Caco-2 (cell line): ENCODE measurements at regions of chr13 and their contacts with region 1.

Region 1: GRCh38 chr13:25267715-25268114 is 19.6 kb downstream of the MTMR6 start:
- DNase-seq: peak in 1 of 2 experiments; percentile 5
- H3K4me3 ChIP-seq: no peak overlapping the region
- H3K4me3 Mint-ChIP-seq: no peak overlapping the region
- H3K27ac Mint-ChIP-seq: no peak overlapping the region
- H3K4me1 ChIP-seq: no peaks in the 10 kb centered on the region
- H3K4me1 Mint-ChIP-seq: no peaks in the 10 kb centered on the region
- H3K27me3 ChIP-seq: no peaks in the 10 kb centered on the region
- H3K27me3 Mint-ChIP-seq: no peaks in the 10 kb centered on the region
- CTCF ChIP-seq: peak in 1 of 2 experiments; percentile 50

Region 2: DNA sequence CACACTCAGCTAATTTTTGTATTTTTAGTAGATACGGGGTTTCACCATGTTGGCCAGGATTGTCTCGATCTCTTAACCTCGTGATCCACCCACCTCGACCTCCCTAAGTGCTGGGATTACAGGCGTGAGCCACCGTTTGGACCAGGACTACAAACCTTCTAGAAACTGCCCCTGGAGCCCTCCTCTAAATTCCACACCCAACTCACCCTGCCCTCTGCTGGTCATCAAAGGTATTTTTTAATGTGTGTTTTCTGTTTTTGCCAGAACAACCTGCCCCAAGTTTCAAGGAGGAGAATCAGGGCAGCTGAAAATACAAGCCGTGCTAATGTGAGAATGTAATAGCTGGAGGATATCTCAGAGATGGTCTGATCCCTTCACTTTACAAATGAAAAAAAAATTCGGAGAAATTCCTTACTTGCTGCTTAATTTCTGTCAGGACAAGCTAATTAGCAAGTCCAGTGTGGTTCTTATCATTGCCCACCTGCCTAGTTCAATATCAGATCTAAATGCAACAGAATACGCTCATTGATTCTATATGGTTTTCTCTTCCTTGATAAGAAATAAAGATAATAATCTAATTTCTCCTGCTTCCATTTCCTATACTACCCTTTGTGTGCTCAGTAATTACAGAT is 108.1 kb after region 1 on chr13:
- CTCF ChIA-PET with region 1: no interaction called
- POLR2A ChIA-PET with region 1: no interaction called
- intact Hi-C with region 1: loop called (anchors 1 kb)
- DNase-seq: peak; percentile 49 to 72
- H3K4me3 ChIP-seq: no peak overlapping the region
- H3K4me3 Mint-ChIP-seq: no peak overlapping the region
- H3K27ac Mint-ChIP-seq: no peak overlapping the region
- H3K4me1 ChIP-seq: no peaks in the 10 kb centered on the region
- H3K4me1 Mint-ChIP-seq: no peaks in the 10 kb centered on the region
- H3K27me3 ChIP-seq: no peaks in the 10 kb centered on the region; the same call in 1 of the 2 replicates
- H3K27me3 Mint-ChIP-seq: peaks cover 14% of the 10 kb centered on the region
- CTCF ChIP-seq: peak; percentile 67 to 70

Region 3: DNA sequence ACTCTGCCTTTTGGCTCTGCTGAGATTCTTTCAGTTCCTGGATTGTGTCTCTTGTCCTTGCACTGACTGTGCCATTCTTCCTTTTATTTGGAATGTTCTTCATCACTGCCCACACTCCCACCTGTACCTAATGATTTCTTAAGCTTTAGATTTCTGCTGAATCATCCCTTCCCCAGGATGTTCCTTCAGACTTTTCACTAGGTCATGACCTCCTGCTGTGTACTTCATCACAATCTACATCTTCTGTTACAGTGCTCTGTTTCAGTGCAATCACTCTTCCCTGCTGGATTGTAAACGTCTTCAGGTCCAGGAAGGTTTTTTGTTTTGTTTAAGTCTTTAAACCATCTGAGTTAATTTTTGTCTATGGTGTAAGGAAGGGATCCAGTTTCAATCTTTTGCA is 385.1 kb after region 1 on chr13:
- CTCF ChIA-PET with region 1: no interaction called
- POLR2A ChIA-PET with region 1: no interaction called
- intact Hi-C with region 1: no loop called
- DNase-seq: no peak
- H3K4me3 ChIP-seq: no peak overlapping the region
- H3K4me3 Mint-ChIP-seq: no peak overlapping the region
- H3K27ac Mint-ChIP-seq: no peak overlapping the region
- H3K4me1 ChIP-seq: no peaks in the 10 kb centered on the region
- H3K4me1 Mint-ChIP-seq: no peaks in the 10 kb centered on the region
- H3K27me3 ChIP-seq: no peaks in the 10 kb centered on the region
- H3K27me3 Mint-ChIP-seq: peaks cover 3% of the 10 kb centered on the region
- CTCF ChIP-seq: no peak